Right ventricle myocardium inferior (tissue), 1 donor: ENCODE measurements at regions of chr10 and their contacts with region 1.

Region 1: GRCh38 chr10:94320285-94320914 is 42.3 kb downstream of the NOC3L start:
- DNase-seq: no peak
- ATAC-seq: peak; percentile 26

Region 2: GRCh38 chr10:94076321-94076841 is 244.0 kb before region 1 on chr10:
- intact Hi-C with region 1: loop called (anchors 5 kb)
- DNase-seq: no peak
- ATAC-seq: peak; percentile 86

Region 3: GRCh38 chr10:94279835-94280709 is 40.3 kb before region 1 on chr10:
- intact Hi-C with region 1: loop called (anchors 2 kb)
- DNase-seq: no peak
- ATAC-seq: peak; percentile 75

Region 4: GRCh38 chr10:94402015-94402842 is 81.8 kb after region 1 on chr10 and contains the start of gene TBC1D12:
- intact Hi-C with region 1: no loop called
- DNase-seq: peak; percentile 97
- ATAC-seq: peak; percentile 99
- total RNA-seq, gene TBC1D12: 4.6 TPM